ENCODE measurements at regions of chr6 and their contacts with region 1.

Region 1: GRCh38 chr6:13574149-13574570 is 241 bp upstream of the SIRT5 start:
- DNase-seq: peak; percentile 95 to 98 (median 97)
- H3K4me3 ChIP-seq: peak overlapping the region; percentile 78 to 93 (median 84)
- H3K27ac ChIP-seq: peak overlapping the region; percentile 54 to 87
- H3K4me1 ChIP-seq: peaks cover 6 to 18% (median 16%) of the 10 kb centered on the region in 4 experiments
- H3K27me3 ChIP-seq: no peaks in the 10 kb centered on the region

Region 2: DNA sequence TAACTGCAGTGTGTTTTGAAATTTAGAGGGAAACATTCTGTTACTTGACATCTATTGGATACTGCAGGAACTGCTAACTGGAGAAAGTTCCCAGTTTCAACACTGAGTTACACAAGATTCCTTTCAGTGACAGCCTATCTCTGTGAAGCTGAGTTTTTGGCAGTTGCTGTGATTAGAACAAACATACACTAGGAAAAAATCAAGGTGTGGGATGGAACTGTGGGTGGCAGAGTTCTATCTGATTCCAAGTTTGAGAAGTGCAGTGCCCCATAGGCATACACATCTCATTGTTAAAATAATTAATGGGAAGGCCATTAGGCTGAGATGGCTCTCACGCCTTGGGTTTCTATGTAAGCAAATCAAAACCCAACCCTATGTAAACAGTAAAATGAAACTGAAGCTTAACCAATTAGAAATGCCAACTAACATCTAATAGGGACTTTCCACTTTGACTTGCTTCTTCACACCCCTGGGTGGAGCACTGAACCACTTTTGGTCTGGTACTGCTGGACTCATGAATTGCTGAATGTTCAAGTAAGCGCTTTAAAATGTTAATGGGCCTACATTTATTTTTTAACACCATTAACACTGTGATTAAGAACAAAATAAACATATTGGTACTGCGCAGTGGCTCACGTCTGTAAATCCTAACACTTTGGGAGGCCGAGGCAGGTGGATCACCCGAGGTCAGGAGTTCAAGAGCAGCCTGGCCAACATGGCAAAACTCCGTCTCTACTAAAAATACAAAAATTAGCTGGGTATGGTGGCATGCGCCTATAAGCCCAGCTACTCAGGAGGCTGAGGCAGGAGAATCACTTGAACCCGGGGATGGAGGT is 190.6 kb before region 1 on chr6:
- CTCF ChIA-PET with region 1: no interaction called
- POLR2A ChIA-PET with region 1: no interaction called
- DNase-seq: peak; percentile 55 to 82 (median 80)
- H3K4me3 ChIP-seq: no peak overlapping the region
- H3K27ac ChIP-seq: no peak overlapping the region
- H3K4me1 ChIP-seq: peaks cover 0 to 22% (median 6%) of the 10 kb centered on the region in 4 experiments
- H3K27me3 ChIP-seq: no peaks in the 10 kb centered on the region

Region 3: GRCh38 chr6:13474360-13474759 is 99.8 kb before region 1 on chr6:
- CTCF ChIA-PET with region 1: interaction called, 11 read pairs
- POLR2A ChIA-PET with region 1: interaction called, 4 read pairs
- DNase-seq: no peak
- H3K4me3 ChIP-seq: peak overlapping the region in 2 of 7 experiments; percentile 32 to 46
- H3K27ac ChIP-seq: peak overlapping the region in 1 of 2 experiments; percentile 40
- H3K4me1 ChIP-seq: peaks cover 10 to 42% (median 32%) of the 10 kb centered on the region in 4 experiments
- H3K27me3 ChIP-seq: no peaks in the 10 kb centered on the region

Region 4: DNA sequence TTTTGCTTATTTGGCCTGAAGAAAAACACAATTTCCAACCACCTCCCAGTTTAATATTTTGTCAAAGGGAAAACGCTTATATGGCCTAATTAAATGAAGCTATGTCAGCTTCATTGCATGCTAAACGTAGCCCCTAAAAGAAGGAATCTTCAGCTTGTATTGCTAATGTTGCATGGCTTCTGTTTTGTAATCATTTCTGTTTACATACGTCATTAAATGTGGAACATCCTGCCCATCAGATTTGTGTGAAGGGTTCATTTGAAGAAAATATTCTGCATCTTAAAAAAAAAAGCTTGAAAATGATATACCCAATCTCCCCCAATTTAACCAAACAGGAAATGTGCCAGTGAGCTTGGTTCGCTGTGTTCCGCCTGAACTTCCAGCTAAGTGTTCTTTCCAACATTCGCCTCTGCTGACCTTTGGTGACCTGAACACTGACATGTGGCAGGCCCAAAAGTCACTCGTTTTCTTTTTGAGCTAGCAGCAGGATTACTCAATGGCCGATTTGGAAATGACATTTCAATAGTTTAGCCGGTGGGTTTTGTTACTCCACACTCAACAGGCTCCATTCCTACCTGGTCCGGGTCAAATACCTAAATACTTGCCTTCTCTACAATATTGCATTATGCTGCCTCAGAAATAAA is 12.4 kb before region 1 on chr6:
- CTCF ChIA-PET with region 1: interaction called, 44 read pairs
- POLR2A ChIA-PET with region 1: interaction called, 3 read pairs
- DNase-seq: peak in 2 of 3 donors; percentile 17 to 31
- H3K4me3 ChIP-seq: no peak overlapping the region
- H3K27ac ChIP-seq: no peak overlapping the region
- H3K4me1 ChIP-seq: peaks cover 0 to 30% (median 2%) of the 10 kb centered on the region in 4 experiments
- H3K27me3 ChIP-seq: no peaks in the 10 kb centered on the region

Region 5: DNA sequence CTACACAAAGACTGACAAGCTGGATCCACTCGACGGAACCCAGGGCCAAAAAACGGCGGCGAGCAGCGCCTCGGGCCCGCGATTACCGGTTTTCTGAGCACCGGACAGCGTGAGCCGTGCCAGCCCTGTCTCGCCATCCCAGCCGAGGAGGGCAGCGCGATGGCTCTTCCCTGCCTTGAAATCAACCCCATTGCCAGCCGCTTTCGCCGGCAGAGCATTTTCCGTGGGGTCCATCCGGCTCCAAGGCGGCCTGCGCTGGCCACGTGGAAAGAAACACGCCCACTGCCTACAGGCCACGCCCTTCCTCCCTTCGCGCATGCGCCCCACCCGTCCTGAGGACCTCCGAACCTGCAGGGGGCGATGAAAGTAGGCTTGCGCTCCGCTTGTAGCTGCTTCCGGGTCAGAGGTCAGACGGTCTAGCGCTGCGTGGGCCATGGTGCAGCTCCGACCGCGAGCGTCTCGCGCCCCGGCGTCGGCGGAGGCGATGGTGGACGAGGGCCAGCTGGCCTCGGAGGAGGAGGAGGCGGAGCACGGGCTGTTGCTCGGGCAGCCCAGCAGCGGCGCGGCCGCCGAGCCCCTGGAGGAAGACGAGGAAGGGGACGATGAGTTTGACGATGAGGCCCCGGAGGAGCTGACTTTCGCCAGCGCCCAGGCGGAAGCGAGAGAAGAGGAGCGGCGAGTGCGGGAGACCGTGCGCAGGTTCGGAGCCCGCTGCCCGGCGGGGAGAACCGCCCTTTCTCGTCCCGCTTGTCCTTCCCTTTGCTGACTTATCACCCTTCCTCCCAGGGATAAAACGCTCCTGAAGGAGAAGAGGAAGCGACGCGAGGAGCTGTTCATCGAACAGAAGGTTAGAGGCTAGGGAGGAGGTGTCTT is 41.0 kb after region 1 on chr6 and contains the start of gene NOL7:
- CTCF ChIA-PET with region 1: interaction called, 27 read pairs
- POLR2A ChIA-PET with region 1: interaction called, 8 read pairs
- DNase-seq: peak; percentile 98 to 99 (median 99)
- H3K4me3 ChIP-seq: peak within 1 kb of the TSS; percentile 61 to 99 (median 93)
- H3K27ac ChIP-seq: peak within 1 kb of the TSS; percentile 84 to 89
- H3K4me1 ChIP-seq: peaks cover 11 to 41% (median 24%) of the 10 kb centered on the region in 4 experiments
- H3K27me3 ChIP-seq: no peaks in the 10 kb centered on the region

Measured in common myeloid progenitor, CD34-positive (primary cell).